Activated CD4-positive, alpha-beta T cell treated with anti-CD3 and anti-CD28 coated beads for 36 hours (primary cell): ENCODE measurements at regions of chr11 and their contacts with region 1.

Region 1: GRCh38 chr11:2298795-2299761 is 2.6 kb downstream of the C11orf21 start:
- DNase-seq: peak; percentile 62
- ATAC-seq: no peak
- H3K4me3 Mint-ChIP-seq: no peak overlapping the region
- H3K27ac Mint-ChIP-seq: no peak overlapping the region
- H3K4me1 Mint-ChIP-seq: peaks cover 34% of the 10 kb centered on the region
- H3K27me3 Mint-ChIP-seq: no peaks in the 10 kb centered on the region

Region 2: GRCh38 chr11:2100361-2101223 is 198.5 kb before region 1 on chr11:
- CTCF ChIA-PET with region 1: no interaction called
- POLR2A ChIA-PET with region 1: no interaction called
- intact Hi-C with region 1: no loop called
- DNase-seq: no peak
- ATAC-seq: no peak
- H3K4me3 Mint-ChIP-seq: no peak overlapping the region
- H3K27ac Mint-ChIP-seq: no peak overlapping the region
- H3K4me1 Mint-ChIP-seq: no peaks in the 10 kb centered on the region
- H3K27me3 Mint-ChIP-seq: peaks cover 8% of the 10 kb centered on the region

Region 3: GRCh38 chr11:2186669-2187279 is 112.3 kb before region 1 on chr11:
- CTCF ChIA-PET with region 1: interaction called, 4 read pairs
- POLR2A ChIA-PET with region 1: no interaction called
- intact Hi-C with region 1: loop called in 1 of 2 experiments (anchors 2 kb)
- DNase-seq: peak; percentile 74
- ATAC-seq: peak; percentile 89
- H3K4me3 Mint-ChIP-seq: no peak overlapping the region
- H3K27ac Mint-ChIP-seq: no peak overlapping the region
- H3K4me1 Mint-ChIP-seq: no peaks in the 10 kb centered on the region
- H3K27me3 Mint-ChIP-seq: peaks cover 9% of the 10 kb centered on the region

Region 4: GRCh38 chr11:2196970-2197770 is 101.9 kb before region 1 on chr11:
- CTCF ChIA-PET with region 1: interaction called, 8 read pairs
- POLR2A ChIA-PET with region 1: no interaction called
- intact Hi-C with region 1: loop called (anchors 1 kb)
- DNase-seq: peak; percentile 89
- ATAC-seq: peak; percentile 98
- H3K4me3 Mint-ChIP-seq: no peak overlapping the region
- H3K27ac Mint-ChIP-seq: no peak overlapping the region
- H3K4me1 Mint-ChIP-seq: no peaks in the 10 kb centered on the region
- H3K27me3 Mint-ChIP-seq: peaks cover 8% of the 10 kb centered on the region

Region 5: GRCh38 chr11:2377511-2378443 is 78.7 kb after region 1 on chr11:
- CTCF ChIA-PET with region 1: interaction called, 3 read pairs
- POLR2A ChIA-PET with region 1: interaction called, 3 read pairs
- intact Hi-C with region 1: loop called in 1 of 2 experiments (anchors 1 kb)
- DNase-seq: peak; percentile 80
- ATAC-seq: peak; percentile 57
- H3K4me3 Mint-ChIP-seq: peak overlapping the region; percentile 86
- H3K27ac Mint-ChIP-seq: peak overlapping the region; percentile 75
- H3K4me1 Mint-ChIP-seq: peaks cover 28% of the 10 kb centered on the region
- H3K27me3 Mint-ChIP-seq: no peaks in the 10 kb centered on the region

Region 6: DNA sequence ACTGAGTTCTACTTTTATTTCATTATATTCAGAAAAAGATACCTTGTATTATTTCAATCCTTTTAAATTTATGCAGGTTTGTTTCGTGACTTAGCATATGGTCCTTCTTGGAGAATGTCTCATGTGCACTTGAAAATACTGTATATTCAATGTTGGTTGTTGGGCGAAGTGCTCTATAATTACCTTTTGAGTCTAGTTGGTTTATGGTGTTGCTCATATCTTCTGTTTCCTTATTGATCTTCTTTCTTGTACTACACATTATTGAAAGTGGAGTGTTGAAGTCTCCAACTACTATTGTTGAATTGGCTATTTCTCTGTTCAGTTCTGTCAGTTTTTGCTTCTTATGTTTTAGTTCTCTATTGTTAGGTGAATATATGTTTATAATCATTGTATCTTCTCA is 310.3 kb after region 1 on chr11:
- CTCF ChIA-PET with region 1: no interaction called
- POLR2A ChIA-PET with region 1: no interaction called
- intact Hi-C with region 1: no loop called
- DNase-seq: no peak
- ATAC-seq: no peak
- H3K4me3 Mint-ChIP-seq: no peak overlapping the region
- H3K27ac Mint-ChIP-seq: no peak overlapping the region
- H3K4me1 Mint-ChIP-seq: no peaks in the 10 kb centered on the region
- H3K27me3 Mint-ChIP-seq: no peaks in the 10 kb centered on the region